ENCODE measurements at regions of chr17 and their contacts with region 1.

Region 1: GRCh38 chr17:7561028-7561575 is 617 bp upstream of the SENP3 start:
- DNase-seq: peak in 1 of 2 experiments; percentile 92
- H3K4me3 ChIP-seq: peak overlapping the region; percentile 69 to 96 (median 78)
- H3K27ac ChIP-seq: peak overlapping the region; percentile 37; the same call in 1 of the 2 replicates
- H3K4me1 ChIP-seq: peaks cover 11 to 40% (median 24%) of the 10 kb centered on the region in 4 experiments
- H3K27me3 ChIP-seq: no peaks in the 10 kb centered on the region
- CTCF ChIP-seq: peak; percentile 86 to 90 (median 87)
- EP300 ChIP-seq: no peak
- POLR2A ChIP-seq: 0 out of 3 replicates have a peak, but pooled peaks of 1 of the 2 experiments have one; percentile 3
- RAD21 ChIP-seq: peak; percentile 83 to 88

Region 2: DNA sequence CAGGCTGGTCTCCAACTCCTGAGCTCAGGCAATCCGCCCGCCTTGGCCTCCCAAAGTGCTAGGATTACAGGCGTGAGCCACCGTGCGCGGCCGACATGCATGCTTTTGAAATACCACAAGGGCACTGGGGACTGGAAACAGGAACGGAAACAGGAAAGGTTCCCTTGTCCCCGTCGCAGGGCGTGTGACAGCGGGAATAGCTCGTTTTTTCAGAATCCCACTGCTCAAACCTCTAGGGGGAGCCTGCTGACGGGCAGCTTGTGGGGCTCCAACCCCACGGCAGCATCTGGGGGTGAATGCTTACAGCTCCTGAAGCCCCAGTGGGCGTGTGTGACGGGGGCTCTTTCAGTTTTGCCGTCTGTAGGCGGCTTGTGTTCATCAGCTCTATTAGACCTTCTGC is 427.7 kb before region 1 on chr17:
- CTCF ChIA-PET with region 1: no interaction called
- POLR2A ChIA-PET with region 1: no interaction called
- DNase-seq: no peak
- H3K4me3 ChIP-seq: peak overlapping the region in 3 of 4 experiments; percentile 10 to 41 (median 19); a peak in 4 of 8 replicates
- H3K27ac ChIP-seq: peak overlapping the region; percentile 68; the same call in 1 of the 2 replicates
- H3K4me1 ChIP-seq: peaks cover 8 to 32% (median 22%) of the 10 kb centered on the region in 4 experiments
- H3K27me3 ChIP-seq: no peaks in the 10 kb centered on the region; a peak in 1 of 7 replicates
- CTCF ChIP-seq: peak; percentile 33 to 57 (median 49); a peak in 3 of 4 replicates
- EP300 ChIP-seq: no peak
- POLR2A ChIP-seq: peak in 1 of 2 experiments; percentile 44; a peak in 1 of 3 replicates
- RAD21 ChIP-seq: peak in 1 of 2 experiments; percentile 13; a peak in 1 of 4 replicates

Region 3: GRCh38 chr17:7351665-7352501 is 209.2 kb before region 1 on chr17 and contains the start of gene KCTD11:
- CTCF ChIA-PET with region 1: interaction called, 22 read pairs
- POLR2A ChIA-PET with region 1: interaction called, 4 read pairs
- DNase-seq: peak; percentile 46 to 89
- H3K4me3 ChIP-seq: peak within 1 kb of the TSS; percentile 39 to 96 (median 84)
- H3K27ac ChIP-seq: peak within 1 kb of the TSS; percentile 66; the same call in 1 of the 2 replicates
- H3K4me1 ChIP-seq: peaks cover 0 to 19% (median 10%) of the 10 kb centered on the region in 4 experiments; a peak in 6 of 7 replicates
- H3K27me3 ChIP-seq: no peaks in the 10 kb centered on the region
- CTCF ChIP-seq: peak in 2 of 3 experiments; percentile 70 to 73; a peak in 2 of 4 replicates
- EP300 ChIP-seq: peak in 1 of 2 experiments; percentile 80; a peak in 2 of 3 replicates
- POLR2A ChIP-seq: peak in 1 of 2 experiments; percentile 82; a peak in 2 of 3 replicates
- RAD21 ChIP-seq: peak; percentile 24 to 48; a peak in 3 of 4 replicates
- total RNA-seq, gene KCTD11: 8.7 and 9.2 TPM in 2 replicates

Region 4: DNA sequence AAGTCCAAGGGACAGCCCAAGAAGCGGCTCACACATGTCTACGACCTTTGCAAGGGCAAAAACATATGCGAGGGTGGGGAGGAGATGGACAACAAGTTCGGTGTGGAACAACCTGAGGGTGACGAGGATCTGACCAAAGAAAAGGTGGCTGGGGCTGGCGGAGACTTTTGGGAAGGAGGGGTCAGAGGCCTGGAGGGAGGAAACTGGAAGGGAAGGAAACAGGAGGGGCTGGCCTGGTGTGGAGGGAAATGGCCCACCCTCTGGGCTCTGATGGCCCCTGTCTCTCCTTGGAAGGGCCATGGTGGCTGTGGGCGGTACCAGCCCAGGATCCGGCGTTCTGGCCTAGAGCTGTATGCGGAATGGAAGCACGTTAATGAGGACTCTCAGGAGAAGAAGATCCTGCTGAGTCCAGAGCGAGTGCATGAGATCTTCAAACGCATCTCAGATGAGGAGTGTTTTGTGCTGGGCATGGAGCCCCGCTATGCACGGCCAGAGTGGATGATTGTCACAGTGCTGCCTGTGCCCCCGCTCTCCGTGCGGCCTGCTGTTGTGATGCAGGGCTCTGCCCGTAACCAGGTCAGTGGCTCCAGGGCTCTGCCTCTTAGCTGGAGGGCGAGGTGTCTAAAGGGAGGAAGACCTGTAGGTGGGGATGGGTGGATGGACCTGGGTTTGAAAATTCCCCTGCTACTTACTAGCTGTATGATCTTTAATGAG is 64.5 kb before region 1 on chr17:
- CTCF ChIA-PET with region 1: interaction called, 10 read pairs
- POLR2A ChIA-PET with region 1: interaction called, 4 read pairs
- DNase-seq: no peak
- H3K4me3 ChIP-seq: no peak overlapping the region
- H3K27ac ChIP-seq: no peak overlapping the region
- H3K4me1 ChIP-seq: no peaks in the 10 kb centered on the region
- H3K27me3 ChIP-seq: no peaks in the 10 kb centered on the region
- CTCF ChIP-seq: no peak
- EP300 ChIP-seq: no peak
- POLR2A ChIP-seq: no peak
- RAD21 ChIP-seq: no peak

Region 5: GRCh38 chr17:7515911-7516610 is 45.0 kb before region 1 on chr17:
- CTCF ChIA-PET with region 1: interaction called, 251 read pairs
- POLR2A ChIA-PET with region 1: interaction called, 17 read pairs
- DNase-seq: no peak
- H3K4me3 ChIP-seq: no peak overlapping the region
- H3K27ac ChIP-seq: no peak overlapping the region
- H3K4me1 ChIP-seq: no peaks in the 10 kb centered on the region
- H3K27me3 ChIP-seq: no peaks in the 10 kb centered on the region
- CTCF ChIP-seq: no peak
- EP300 ChIP-seq: no peak
- POLR2A ChIP-seq: no peak
- RAD21 ChIP-seq: no peak

Region 6: GRCh38 chr17:7548585-7549400 is 12.3 kb before region 1 on chr17 and contains the start of gene TNFSF12:
- CTCF ChIA-PET with region 1: interaction called, 27 read pairs
- POLR2A ChIA-PET with region 1: interaction called, 14 read pairs
- DNase-seq: peak in 1 of 2 experiments; percentile 73
- H3K4me3 ChIP-seq: peak within 1 kb of the TSS; percentile 56 to 77 (median 70)
- H3K27ac ChIP-seq: no peak within 1 kb of the TSS
- H3K4me1 ChIP-seq: peaks cover 0 to 4% (median 3%) of the 10 kb centered on the region in 4 experiments; a peak in 2 of 7 replicates
- H3K27me3 ChIP-seq: peaks cover 0 to 5% (median 3%) of the 10 kb centered on the region in 4 experiments; a peak in 4 of 7 replicates
- CTCF ChIP-seq: no peak
- EP300 ChIP-seq: no peak
- POLR2A ChIP-seq: no peak
- RAD21 ChIP-seq: 0 out of 4 replicates have a peak, but pooled peaks of 1 of the 2 experiments have one; percentile 7
- total RNA-seq, gene TNFSF12: 5.5 and 7.2 TPM in 2 replicates

Region 7: DNA sequence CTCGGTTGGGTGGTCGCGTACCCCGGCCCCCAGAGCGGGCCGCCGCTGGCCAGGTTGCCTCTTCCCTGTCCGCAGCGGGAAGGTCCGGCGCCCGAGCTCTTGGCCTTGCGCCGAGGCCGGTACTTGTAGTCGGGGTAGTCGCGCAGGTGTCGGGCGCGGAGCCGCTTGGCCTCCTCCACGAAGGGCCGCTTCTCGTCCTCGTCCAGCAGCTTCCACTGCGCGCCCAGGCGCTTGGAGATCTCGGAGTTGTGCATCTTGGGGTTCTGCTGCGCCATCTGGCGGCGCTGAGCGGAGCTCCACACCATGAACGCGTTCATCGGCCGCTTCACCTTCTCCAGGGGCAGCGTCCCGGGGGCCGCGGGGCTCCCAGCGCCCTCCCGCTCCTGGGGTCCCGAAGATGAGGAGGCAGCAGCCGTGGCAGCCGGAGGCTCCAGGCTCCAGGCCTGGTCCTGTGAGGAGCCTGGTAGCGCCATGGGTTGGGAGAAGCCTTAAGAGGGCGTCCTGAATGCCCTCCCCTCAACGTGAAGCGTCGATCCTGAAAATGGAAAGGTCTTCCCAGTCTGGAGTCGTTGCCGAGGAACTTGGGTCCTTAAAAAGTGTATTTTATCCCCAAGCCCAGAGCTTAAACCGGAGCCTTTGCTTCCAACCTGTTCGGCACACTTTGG is 28.2 kb after region 1 on chr17:
- CTCF ChIA-PET with region 1: interaction called, 24 read pairs
- POLR2A ChIA-PET with region 1: interaction called, 1,144 read pairs
- DNase-seq: peak in 1 of 2 experiments; percentile 91
- H3K4me3 ChIP-seq: peak overlapping the region; percentile 59 to 73 (median 69)
- H3K27ac ChIP-seq: no peak overlapping the region
- H3K4me1 ChIP-seq: peaks cover 6 to 23% (median 18%) of the 10 kb centered on the region in 4 experiments
- H3K27me3 ChIP-seq: no peaks in the 10 kb centered on the region
- CTCF ChIP-seq: peak; percentile 86 to 92 (median 91)
- EP300 ChIP-seq: no peak
- POLR2A ChIP-seq: peak in 1 of 2 experiments; percentile 59; a peak in 2 of 3 replicates
- RAD21 ChIP-seq: peak; percentile 66 to 83

Measured in H1 (cell line).